Activated CD4-positive, alpha-beta memory T cell treated with anti-CD3 and anti-CD28 coated beads, Interleukin-2, amount 10 ng/mL, durations not matched to agents 7 days and 5 days (primary cell): ENCODE measurements at regions of chr12 and their contacts with region 1.

Region 1: GRCh38 chr12:14394317-14395073 is 29.0 kb downstream of the ATF7IP start:
- DNase-seq: peak; percentile 55
- H3K4me3 Mint-ChIP-seq: peak overlapping the region; percentile 75
- H3K27ac Mint-ChIP-seq: peak overlapping the region; percentile 97
- H3K4me1 Mint-ChIP-seq: peaks cover 85% of the 10 kb centered on the region
- H3K27me3 Mint-ChIP-seq: no peaks in the 10 kb centered on the region

Region 2: GRCh38 chr12:14193639-14194038 is 200.9 kb before region 1 on chr12:
- CTCF ChIA-PET with region 1: no interaction called
- POLR2A ChIA-PET with region 1: no interaction called
- DNase-seq: no peak
- H3K4me3 Mint-ChIP-seq: no peak overlapping the region
- H3K27ac Mint-ChIP-seq: no peak overlapping the region
- H3K4me1 Mint-ChIP-seq: no peaks in the 10 kb centered on the region
- H3K27me3 Mint-ChIP-seq: no peaks in the 10 kb centered on the region

Region 3: DNA sequence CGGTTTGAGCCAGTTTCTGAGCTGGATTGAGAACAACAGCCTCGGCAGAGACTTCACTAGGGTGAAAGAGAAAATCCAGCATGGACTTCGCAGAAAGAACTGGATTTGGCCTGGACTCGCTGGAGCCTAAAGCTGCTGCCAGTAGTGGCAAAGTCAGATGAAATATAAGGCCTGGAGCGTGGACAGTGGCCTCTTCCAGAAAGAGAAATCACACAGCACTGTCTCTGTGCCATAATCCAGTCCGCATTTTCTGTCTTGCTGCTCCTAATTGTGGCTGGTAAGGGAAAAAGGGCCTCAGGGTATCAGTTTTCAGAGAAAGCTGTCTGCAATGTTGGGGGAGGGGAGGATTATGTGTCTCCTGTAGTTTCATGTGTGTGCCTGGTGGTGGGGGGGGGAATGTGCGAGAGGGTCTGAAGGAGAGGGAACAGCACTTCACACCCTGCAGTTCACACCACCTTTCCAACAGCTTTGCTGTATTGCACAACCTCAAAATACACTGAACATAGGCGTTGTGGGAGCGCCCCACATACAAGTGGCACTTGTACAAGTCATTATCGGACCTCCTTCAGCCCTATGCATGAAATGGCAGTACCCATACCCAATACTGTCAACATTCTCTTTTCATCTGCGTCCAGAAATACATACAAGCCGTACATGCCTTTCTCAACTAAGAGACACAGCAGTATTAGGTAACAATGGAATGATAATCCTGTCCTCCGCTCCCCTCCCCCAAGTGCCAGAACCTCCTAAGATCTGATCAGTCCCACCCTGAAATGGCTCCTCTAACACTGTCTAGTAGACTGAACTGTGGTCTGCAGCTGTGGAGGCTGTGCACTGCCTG is 136.5 kb before region 1 on chr12:
- CTCF ChIA-PET with region 1: interaction called, 16 read pairs
- POLR2A ChIA-PET with region 1: interaction called, 45 read pairs
- DNase-seq: peak; percentile 95
- H3K4me3 Mint-ChIP-seq: peak overlapping the region; percentile 55
- H3K27ac Mint-ChIP-seq: peak overlapping the region; percentile 100
- H3K4me1 Mint-ChIP-seq: peaks cover 51% of the 10 kb centered on the region
- H3K27me3 Mint-ChIP-seq: no peaks in the 10 kb centered on the region

Region 4: DNA sequence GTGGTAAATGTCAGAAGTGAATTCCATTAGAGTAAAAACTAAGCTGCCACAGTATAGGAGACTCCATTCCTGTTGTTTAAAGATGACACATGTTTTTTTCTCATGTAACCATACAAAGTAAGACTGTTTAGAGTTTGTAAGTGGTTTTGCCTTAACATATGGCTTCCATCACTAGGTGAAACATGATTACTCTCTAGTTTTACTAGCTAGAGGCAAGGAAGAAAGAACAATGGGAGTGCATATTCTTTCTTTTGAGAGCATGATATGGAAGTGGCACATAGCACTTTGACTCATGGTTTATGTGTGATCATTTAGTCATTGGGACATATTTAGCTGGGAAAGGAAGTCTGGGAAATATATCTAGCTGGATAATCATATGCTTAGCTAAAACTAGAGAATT is 21.3 kb before region 1 on chr12:
- CTCF ChIA-PET with region 1: interaction called, 3 read pairs
- POLR2A ChIA-PET with region 1: interaction called, 16 read pairs
- DNase-seq: no peak
- H3K4me3 Mint-ChIP-seq: no peak overlapping the region
- H3K27ac Mint-ChIP-seq: no peak overlapping the region
- H3K4me1 Mint-ChIP-seq: peaks cover 50% of the 10 kb centered on the region
- H3K27me3 Mint-ChIP-seq: no peaks in the 10 kb centered on the region

Region 5: DNA sequence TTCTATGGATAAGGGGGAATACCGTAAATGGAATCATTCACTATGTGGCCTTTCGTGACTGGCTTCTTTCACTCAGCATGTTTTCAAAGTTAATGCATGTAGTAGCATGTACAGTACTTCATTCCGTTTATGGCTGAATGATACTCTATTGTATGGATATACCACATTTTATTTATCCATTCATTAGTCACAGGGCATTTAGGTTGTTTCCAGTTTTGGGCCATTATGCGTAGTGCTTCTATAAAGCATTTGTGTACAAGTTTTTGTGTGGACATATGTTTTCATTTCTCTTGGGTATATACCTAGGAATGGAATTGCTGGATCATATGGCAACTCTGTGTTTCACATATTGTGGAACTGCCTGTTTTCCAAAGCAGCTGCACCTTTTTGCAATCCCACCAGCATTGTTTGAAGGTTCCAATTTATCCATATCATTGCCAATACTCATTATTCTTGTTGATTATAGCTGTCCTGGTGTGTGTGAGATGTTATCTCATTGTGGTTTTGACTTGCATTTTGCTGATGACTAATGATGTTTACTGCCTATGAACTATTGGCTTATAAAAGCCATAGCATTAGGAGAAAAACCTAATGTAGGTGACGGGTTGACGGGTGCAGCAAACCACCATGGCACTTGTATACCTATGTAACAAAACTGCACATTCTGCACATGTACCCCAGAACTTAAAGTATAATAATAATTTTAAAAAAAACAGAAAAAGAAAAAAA is 16.5 kb after region 1 on chr12:
- CTCF ChIA-PET with region 1: interaction called, 3 read pairs
- POLR2A ChIA-PET with region 1: interaction called, 14 read pairs
- DNase-seq: peak; percentile 56
- H3K4me3 Mint-ChIP-seq: no peak overlapping the region
- H3K27ac Mint-ChIP-seq: peak overlapping the region; percentile 2
- H3K4me1 Mint-ChIP-seq: peaks cover 61% of the 10 kb centered on the region
- H3K27me3 Mint-ChIP-seq: no peaks in the 10 kb centered on the region

Region 6: GRCh38 chr12:14417715-14418114 is 23.2 kb after region 1 on chr12:
- CTCF ChIA-PET with region 1: interaction called, 3 read pairs
- POLR2A ChIA-PET with region 1: interaction called, 14 read pairs
- DNase-seq: peak; percentile 81
- H3K4me3 Mint-ChIP-seq: peak overlapping the region; percentile 73
- H3K27ac Mint-ChIP-seq: peak overlapping the region; percentile 90
- H3K4me1 Mint-ChIP-seq: peaks cover 58% of the 10 kb centered on the region
- H3K27me3 Mint-ChIP-seq: no peaks in the 10 kb centered on the region

Region 7: GRCh38 chr12:14454098-14454907 is 59.8 kb after region 1 on chr12:
- CTCF ChIA-PET with region 1: interaction called, 6 read pairs
- POLR2A ChIA-PET with region 1: interaction called, 12 read pairs
- DNase-seq: peak; percentile 44
- H3K4me3 Mint-ChIP-seq: peak overlapping the region; percentile 27
- H3K27ac Mint-ChIP-seq: peak overlapping the region; percentile 67
- H3K4me1 Mint-ChIP-seq: peaks cover 41% of the 10 kb centered on the region
- H3K27me3 Mint-ChIP-seq: no peaks in the 10 kb centered on the region